ENCODE measurements at regions of chr2 and their contacts with region 1.

Region 1: DNA sequence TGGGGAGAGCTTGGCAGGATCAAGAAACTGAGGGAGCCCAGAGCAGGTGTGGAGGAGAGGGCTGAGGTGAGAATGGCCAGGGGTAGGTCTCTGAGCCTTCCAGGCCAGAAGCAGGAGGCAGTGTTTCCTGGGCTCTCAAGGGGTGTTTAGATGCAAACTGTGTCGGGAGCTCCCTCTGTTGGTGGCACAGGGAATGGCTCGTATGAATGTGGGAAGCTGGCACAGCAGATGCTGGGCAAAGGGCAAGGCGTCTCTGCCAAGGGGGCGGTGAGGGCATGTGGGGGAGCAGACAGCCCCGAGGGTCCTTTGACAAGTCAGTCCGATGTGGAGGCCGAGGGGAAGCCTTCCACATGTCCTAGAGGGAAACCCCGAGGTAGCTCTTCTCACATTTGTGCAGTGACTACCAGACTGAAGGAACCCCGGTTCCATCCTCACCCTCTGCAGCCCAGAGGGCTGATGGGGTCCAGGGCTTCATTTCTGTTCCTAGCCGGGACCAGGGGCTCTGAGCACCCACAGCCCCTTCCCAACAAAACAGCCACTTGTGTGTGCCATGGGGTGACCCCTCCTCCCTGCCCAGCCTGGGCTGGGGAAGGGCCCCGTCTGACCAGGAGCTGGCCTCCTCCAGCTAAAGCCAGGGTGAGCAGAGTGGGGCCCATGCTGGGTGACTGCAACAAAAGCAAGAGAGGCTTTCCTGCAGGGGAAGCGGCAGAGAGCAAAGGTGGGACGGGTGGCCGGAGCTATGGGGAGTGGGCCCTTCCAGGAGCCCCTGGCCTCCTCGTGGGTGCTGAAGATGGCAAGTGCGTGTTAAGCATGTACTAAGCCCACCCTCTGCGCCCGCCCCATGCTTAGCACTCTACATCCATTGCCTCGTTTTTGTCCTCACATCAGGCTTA is 103.4 kb downstream of the SEPTIN10 start:
- DNase-seq: peak; percentile 72 to 83 (median 73)
- H3K4me3 ChIP-seq: no peak overlapping the region
- H3K27ac ChIP-seq: no peak overlapping the region
- H3K4me1 ChIP-seq: peaks cover 1 to 39% (median 21%) of the 10 kb centered on the region in 4 experiments
- H3K27me3 ChIP-seq: no peaks in the 10 kb centered on the region

Region 2: GRCh38 chr2:109128048-109128465 is 382.3 kb before region 1 on chr2:
- CTCF ChIA-PET with region 1: interaction called, 72 read pairs
- POLR2A ChIA-PET with region 1: no interaction called
- DNase-seq: peak; percentile 51 to 58 (median 54)
- H3K4me3 ChIP-seq: peak overlapping the region; percentile 41 to 80 (median 68)
- H3K27ac ChIP-seq: no peak overlapping the region
- H3K4me1 ChIP-seq: peaks cover 0 to 26% (median 22%) of the 10 kb centered on the region in 4 experiments
- H3K27me3 ChIP-seq: peaks cover 4 to 54% (median 26%) of the 10 kb centered on the region in 5 experiments

Region 3: DNA sequence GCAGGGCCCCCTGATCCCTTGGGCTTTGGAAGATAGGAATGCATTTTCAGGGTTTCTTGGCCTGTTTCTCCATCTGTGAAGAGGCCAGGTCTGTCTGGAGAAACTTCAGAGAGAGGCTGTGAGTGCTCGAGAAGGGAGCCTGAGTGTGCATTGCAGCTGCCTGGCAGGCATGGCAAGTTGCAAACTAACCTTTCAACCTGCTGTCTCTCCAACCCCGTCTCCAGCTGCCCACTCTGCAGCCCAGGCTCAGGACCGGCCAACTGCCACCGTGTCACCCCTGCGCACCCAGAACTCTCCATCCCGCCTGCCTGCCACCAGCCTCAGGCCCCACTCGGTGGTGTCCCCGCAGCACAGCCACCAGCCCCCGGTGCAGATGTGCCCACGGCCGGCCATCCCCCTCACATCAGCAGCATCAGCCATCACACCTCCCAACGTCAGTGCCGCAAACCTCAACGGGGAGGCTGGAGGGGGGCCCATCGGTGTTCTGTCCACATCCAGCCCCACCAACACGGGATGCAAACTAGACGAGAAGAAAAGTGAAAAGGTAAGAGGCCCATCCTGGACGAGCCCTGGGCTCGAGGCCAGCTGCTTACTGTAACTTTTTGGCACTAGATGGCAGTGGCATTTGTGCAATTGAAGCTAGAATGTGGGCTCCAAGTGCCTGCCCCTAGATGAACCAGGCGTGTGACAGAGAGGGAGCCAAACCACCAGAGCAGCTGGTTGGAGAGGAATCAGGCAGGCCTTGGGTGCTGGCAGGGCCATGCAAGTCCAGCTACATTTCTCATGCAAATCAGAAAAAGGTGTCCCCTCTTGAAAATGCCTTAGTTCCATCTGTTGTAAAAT is 61.2 kb before region 1 on chr2:
- CTCF ChIA-PET with region 1: interaction called, 50 read pairs
- POLR2A ChIA-PET with region 1: interaction called, 4 read pairs
- DNase-seq: peak; percentile 52 to 83 (median 78)
- H3K4me3 ChIP-seq: no peak overlapping the region
- H3K27ac ChIP-seq: no peak overlapping the region
- H3K4me1 ChIP-seq: peaks cover 0 to 30% (median 10%) of the 10 kb centered on the region in 4 experiments
- H3K27me3 ChIP-seq: no peaks in the 10 kb centered on the region

Region 4: GRCh38 chr2:109525836-109526235 is 15.5 kb after region 1 on chr2:
- CTCF ChIA-PET with region 1: interaction called, 16 read pairs
- POLR2A ChIA-PET with region 1: no interaction called
- DNase-seq: no peak
- H3K4me3 ChIP-seq: no peak overlapping the region
- H3K27ac ChIP-seq: no peak overlapping the region
- H3K4me1 ChIP-seq: no peaks in the 10 kb centered on the region
- H3K27me3 ChIP-seq: peaks cover 0 to 2% (median 0%) of the 10 kb centered on the region in 5 experiments

Measured in common myeloid progenitor, CD34-positive (primary cell).